Activated CD8-positive, alpha-beta T cell treated with anti-CD3 and anti-CD28 coated beads for 36 hours (primary cell): ENCODE measurements at regions of chr1 and their contacts with region 1.

Region 1: DNA sequence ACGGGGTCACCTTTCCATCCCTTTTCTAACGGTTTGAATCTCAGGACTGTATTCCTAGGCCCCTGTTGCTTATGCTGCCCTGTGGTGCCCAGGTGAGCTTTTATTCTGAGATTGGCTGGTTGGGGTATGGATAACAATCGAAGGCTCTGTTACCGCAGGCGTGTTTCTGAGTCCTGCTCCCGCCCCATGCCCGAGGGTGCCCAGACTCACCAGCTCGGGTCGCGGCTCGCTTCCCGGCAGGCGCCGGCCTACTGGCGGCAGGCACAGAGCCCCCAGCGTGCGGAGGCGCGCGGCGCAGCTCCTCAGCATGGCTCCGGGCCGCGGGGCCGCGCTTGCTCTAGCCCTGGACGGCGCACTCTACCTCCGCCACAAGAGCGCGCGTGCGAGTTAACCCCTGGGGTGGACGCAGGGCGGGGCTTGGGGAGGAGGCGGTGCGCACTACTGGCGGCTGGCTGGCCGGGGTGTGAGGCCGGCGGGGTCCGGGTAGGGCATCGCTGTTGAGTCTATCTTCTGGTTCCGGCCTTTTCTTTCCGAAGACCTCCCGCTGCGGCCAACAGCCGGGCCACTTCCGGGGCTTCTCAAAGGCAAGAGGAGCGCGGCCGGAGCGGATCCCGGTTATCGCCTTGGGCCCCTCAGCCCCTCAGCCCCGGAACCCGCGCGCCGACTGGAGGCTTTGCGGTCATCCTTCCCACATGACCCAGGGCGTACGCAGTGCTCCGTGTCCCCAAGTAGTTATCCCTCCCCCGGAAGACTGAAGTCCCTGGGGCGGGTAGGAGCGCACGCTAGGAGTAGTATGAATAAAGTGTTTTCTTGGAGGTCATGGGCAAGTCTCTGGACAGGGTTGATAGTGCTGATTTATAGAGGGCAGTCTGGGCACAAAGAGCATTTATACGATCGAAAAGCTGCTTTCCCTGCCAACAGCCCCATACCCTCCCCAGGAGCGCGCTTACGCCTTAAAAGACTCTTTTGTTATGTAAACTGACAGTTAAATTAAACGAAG is at the start of gene THEM4:
- DNase-seq: peak; percentile 99
- ATAC-seq: peak; percentile 94
- H3K4me3 Mint-ChIP-seq: peak within 1 kb of the TSS; percentile 82
- H3K27ac Mint-ChIP-seq: peak within 1 kb of the TSS; percentile 91
- H3K4me1 Mint-ChIP-seq: peaks cover 33% of the 10 kb centered on the region
- H3K27me3 Mint-ChIP-seq: no peaks in the 10 kb centered on the region
- CTCF ChIP-seq: no peak
- total RNA-seq, gene THEM4: 19.9 to 22.0 TPM

Region 2: DNA sequence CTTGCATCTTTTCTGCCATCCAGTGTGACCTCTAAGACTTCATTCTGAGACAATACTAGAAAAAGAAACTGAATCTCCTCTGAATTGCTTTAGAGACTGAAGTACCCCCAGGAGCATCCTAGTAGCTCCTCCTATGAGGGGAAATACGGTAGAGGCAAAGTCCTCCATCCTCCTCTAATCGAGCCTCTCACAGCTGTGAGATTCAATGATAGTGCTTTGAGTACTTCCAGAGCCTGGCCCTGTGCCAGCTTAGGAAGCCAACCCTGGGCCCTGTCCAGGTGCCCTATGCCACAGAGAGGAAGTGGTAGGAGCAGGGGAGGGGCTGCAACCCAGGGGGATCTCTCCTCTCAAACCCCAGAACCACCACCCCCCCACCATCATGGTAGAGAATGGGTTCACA is 88.5 kb before region 1 on chr1:
- CTCF ChIA-PET with region 1: no interaction called
- POLR2A ChIA-PET with region 1: no interaction called
- intact Hi-C with region 1: no loop called
- DNase-seq: no peak
- ATAC-seq: peak; percentile 25
- H3K4me3 Mint-ChIP-seq: no peak overlapping the region
- H3K27ac Mint-ChIP-seq: peak overlapping the region; percentile 26
- H3K4me1 Mint-ChIP-seq: peaks cover 51% of the 10 kb centered on the region
- H3K27me3 Mint-ChIP-seq: no peaks in the 10 kb centered on the region
- CTCF ChIP-seq: no peak

Region 3: GRCh38 chr1:151898513-151898991 is 10.9 kb before region 1 on chr1:
- CTCF ChIA-PET with region 1: interaction called, 27 read pairs
- POLR2A ChIA-PET with region 1: interaction called, 33 read pairs
- intact Hi-C with region 1: no loop called
- DNase-seq: peak; percentile 44
- ATAC-seq: peak; percentile 66
- H3K4me3 Mint-ChIP-seq: peak overlapping the region; percentile 22
- H3K27ac Mint-ChIP-seq: peak overlapping the region; percentile 88
- H3K4me1 Mint-ChIP-seq: peaks cover 55% of the 10 kb centered on the region
- H3K27me3 Mint-ChIP-seq: no peaks in the 10 kb centered on the region
- CTCF ChIP-seq: no peak

Region 4: GRCh38 chr1:151924679-151925587 is 15.5 kb after region 1 on chr1:
- CTCF ChIA-PET with region 1: interaction called, 4 read pairs
- POLR2A ChIA-PET with region 1: interaction called, 16 read pairs
- intact Hi-C with region 1: no loop called
- DNase-seq: no peak
- ATAC-seq: peak; percentile 64
- H3K4me3 Mint-ChIP-seq: no peak overlapping the region
- H3K27ac Mint-ChIP-seq: peak overlapping the region; percentile 36
- H3K4me1 Mint-ChIP-seq: peaks cover 16% of the 10 kb centered on the region
- H3K27me3 Mint-ChIP-seq: no peaks in the 10 kb centered on the region
- CTCF ChIP-seq: no peak

Region 5: GRCh38 chr1:151940541-151940940 is 31.1 kb after region 1 on chr1:
- CTCF ChIA-PET with region 1: interaction called, 5 read pairs
- POLR2A ChIA-PET with region 1: interaction called, 14 read pairs
- intact Hi-C with region 1: no loop called
- DNase-seq: no peak
- ATAC-seq: no peak
- H3K4me3 Mint-ChIP-seq: no peak overlapping the region
- H3K27ac Mint-ChIP-seq: peak overlapping the region; percentile 82
- H3K4me1 Mint-ChIP-seq: peaks cover 40% of the 10 kb centered on the region
- H3K27me3 Mint-ChIP-seq: no peaks in the 10 kb centered on the region
- CTCF ChIP-seq: no peak